ENCODE measurements at regions of chr1 and their contacts with region 1.

Region 1: DNA sequence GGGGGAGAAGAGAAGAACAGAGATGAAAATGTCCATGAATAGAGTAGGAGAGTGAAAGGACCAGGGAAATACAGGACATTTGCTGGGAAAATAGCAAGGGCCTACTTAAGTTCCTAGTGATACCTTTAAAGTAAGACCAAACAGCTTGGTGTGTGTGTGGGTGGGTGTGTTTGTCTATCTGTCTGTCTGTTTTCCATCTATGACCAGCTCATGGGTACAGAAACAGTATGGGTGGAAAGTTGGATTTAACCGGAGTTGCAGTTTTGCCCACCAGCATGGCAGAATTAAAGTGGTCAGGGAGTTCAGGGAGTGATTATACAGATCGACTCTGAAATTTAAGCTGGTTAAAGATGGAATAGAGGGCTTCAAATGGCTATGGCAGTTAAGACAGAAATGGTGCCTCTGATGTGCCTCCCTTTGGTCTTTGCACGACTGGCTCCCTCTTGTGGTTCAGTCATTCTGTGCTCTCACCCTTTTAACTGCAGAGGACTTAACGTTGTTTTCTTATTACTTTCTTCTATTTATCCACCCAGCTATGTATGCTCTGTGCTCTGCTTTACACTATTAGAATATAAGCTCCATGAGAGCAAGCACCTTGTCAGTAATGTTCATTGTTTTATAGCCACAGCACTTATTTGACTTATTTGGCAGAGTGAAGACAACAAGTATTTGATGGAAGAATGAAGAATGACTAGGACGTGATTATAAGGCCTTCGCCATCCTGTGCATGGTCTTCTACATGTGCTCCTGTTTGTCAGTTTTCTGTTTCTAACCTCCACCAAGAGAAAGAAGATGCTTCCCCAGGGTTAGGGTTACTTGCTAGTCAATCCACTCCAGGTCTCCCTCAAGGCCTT is 72.7 kb upstream of the AK4 start:
- DNase-seq: peak; percentile 75
- H3K4me3 ChIP-seq: no peak overlapping the region
- H3K27ac ChIP-seq: no peak overlapping the region
- H3K4me1 ChIP-seq: no peaks in the 10 kb centered on the region
- H3K27me3 ChIP-seq: peaks cover 0 to 3% of the 10 kb centered on the region in 2 experiments
- CTCF ChIP-seq: peak; percentile 74 to 76
- POLR2A ChIP-seq: no peak

Region 2: DNA sequence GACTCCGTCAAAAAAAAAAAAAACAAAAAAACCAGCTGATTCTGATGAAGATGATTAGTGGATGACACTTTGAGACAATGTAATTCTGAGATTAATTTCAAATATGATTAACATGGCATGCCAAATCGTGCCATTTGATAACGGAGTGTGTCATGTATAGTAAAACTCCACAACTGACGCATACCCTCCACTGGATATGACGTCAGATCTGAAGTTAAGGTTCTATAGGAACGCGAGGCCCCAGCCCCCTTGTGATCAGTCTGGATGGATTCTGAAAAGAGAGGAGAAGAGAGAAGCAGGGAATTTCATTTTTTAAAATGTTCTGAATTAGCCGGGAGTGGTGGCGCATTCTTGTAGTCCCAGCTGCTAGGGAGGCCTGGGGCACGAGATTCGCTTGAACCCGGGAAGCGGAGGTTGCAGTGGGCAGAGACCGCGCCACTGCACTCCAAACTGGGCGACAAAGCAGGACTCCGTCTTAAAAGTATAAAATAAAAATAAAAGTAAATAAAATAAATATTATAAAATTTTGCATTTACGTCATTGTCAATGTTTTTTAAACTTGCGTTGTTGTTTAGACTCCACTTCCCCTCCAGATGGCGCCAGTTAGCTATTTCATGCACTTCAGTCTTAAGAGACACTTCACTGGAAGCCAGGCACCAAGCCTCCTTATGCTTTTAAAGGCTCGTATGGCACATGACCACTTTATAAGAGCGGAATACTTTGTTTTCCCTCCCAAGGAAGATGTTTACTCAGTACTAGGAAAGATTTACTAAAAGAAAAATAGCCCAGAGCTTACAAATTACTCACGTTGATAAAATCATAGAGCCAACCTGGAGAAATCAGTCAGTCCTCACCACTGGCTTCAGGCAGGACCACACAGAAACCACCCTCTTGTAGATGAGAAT is 806.4 kb before region 1 on chr1:
- CTCF ChIA-PET with region 1: interaction called, 4 read pairs
- POLR2A ChIA-PET with region 1: no interaction called
- dilution Hi-C with region 1: no loop called
- intact Hi-C with region 1: loop called (anchors 1 kb)
- DNase-seq: peak; percentile 76
- H3K4me3 ChIP-seq: no peak overlapping the region
- H3K27ac ChIP-seq: no peak overlapping the region
- H3K4me1 ChIP-seq: peaks cover under 1% of the 10 kb centered on the region
- H3K27me3 ChIP-seq: peaks cover 0 to 5% of the 10 kb centered on the region in 2 experiments
- CTCF ChIP-seq: peak; percentile 49 to 58
- POLR2A ChIP-seq: no peak

Region 3: DNA sequence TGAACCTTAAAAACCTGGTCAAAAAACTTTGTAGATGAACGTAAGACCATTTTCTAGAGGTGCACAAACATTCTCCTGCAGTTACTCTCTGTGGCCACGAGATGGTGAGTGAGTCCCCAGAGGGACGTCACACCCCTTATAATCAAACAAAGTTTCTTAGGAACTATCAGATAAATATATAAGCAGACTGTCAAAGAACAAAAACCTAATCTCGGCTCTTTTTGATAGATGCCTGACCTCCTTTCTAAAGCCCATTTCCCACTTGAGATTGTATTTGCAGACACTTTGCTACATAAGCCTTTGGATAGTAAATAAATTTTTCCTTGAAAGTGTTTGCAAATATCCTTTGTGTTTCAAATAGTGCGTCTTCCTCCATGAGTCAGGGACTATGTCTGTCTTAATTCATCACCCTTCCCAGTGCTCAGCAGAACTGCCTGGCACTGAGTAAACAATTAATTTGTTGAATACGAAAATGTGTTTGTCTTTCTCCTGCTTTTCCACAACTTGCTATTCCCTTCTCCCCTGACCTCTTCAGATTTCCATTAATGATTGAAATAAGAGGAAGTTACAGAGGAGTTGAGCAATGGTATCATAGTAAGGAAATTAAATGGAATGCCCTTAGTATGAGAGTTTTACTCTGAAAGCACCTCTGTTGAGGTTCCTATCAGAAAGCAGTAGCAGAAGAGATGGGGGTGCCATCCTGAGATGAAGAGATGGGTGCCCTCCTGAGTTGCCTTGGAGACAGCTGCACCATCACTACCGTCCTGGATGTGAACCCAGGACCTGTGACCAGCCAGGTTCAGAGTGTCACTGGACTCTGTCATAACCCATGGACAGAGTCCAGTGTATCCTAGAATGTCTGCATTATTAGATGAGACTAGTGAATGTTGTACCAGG is 388.3 kb before region 1 on chr1:
- CTCF ChIA-PET with region 1: interaction called, 3 read pairs
- POLR2A ChIA-PET with region 1: no interaction called
- dilution Hi-C with region 1: no loop called
- intact Hi-C with region 1: loop called (anchors 1 kb)
- DNase-seq: peak; percentile 88
- H3K4me3 ChIP-seq: peak overlapping the region in 1 of 3 experiments; percentile 22
- H3K27ac ChIP-seq: peak overlapping the region; percentile 95
- H3K4me1 ChIP-seq: peaks cover 31% of the 10 kb centered on the region
- H3K27me3 ChIP-seq: no peaks in the 10 kb centered on the region
- CTCF ChIP-seq: peak; percentile 67 to 73
- POLR2A ChIP-seq: no peak

Region 4: GRCh38 chr1:64733581-64734286 is 341.6 kb before region 1 on chr1:
- CTCF ChIA-PET with region 1: no interaction called
- POLR2A ChIA-PET with region 1: no interaction called
- dilution Hi-C with region 1: no loop called
- intact Hi-C with region 1: no loop called
- DNase-seq: no peak
- H3K4me3 ChIP-seq: no peak overlapping the region
- H3K27ac ChIP-seq: no peak overlapping the region
- H3K4me1 ChIP-seq: no peaks in the 10 kb centered on the region
- H3K27me3 ChIP-seq: peaks cover 0 to 1% of the 10 kb centered on the region in 2 experiments
- CTCF ChIP-seq: no peak
- POLR2A ChIP-seq: no peak

Region 5: GRCh38 chr1:64744492-64745180 is 330.7 kb before region 1 on chr1 and contains the start of gene RAVER2:
- CTCF ChIA-PET with region 1: interaction called, 3 read pairs
- POLR2A ChIA-PET with region 1: no interaction called
- dilution Hi-C with region 1: no loop called
- intact Hi-C with region 1: loop called (anchors 5 kb)
- DNase-seq: peak; percentile 56
- H3K4me3 ChIP-seq: peak within 1 kb of the TSS; percentile 61 to 89 (median 71)
- H3K27ac ChIP-seq: peak within 1 kb of the TSS; percentile 26
- H3K4me1 ChIP-seq: peaks cover 6% of the 10 kb centered on the region
- H3K27me3 ChIP-seq: no peaks in the 10 kb centered on the region
- CTCF ChIP-seq: peak; percentile 40 to 54
- POLR2A ChIP-seq: peak; percentile 37
- total RNA-seq, gene RAVER2: 10.3 and 13.9 TPM in 2 replicates

Region 6: GRCh38 chr1:64823691-64824476 is 251.5 kb before region 1 on chr1:
- CTCF ChIA-PET with region 1: interaction called, 6 read pairs
- POLR2A ChIA-PET with region 1: no interaction called
- dilution Hi-C with region 1: no loop called
- intact Hi-C with region 1: loop called (anchors 1 kb)
- DNase-seq: peak; percentile 81
- H3K4me3 ChIP-seq: no peak overlapping the region
- H3K27ac ChIP-seq: no peak overlapping the region
- H3K4me1 ChIP-seq: peaks cover 2% of the 10 kb centered on the region
- H3K27me3 ChIP-seq: no peaks in the 10 kb centered on the region
- CTCF ChIP-seq: peak; percentile 61 to 69
- POLR2A ChIP-seq: no peak

Region 7: GRCh38 chr1:65059930-65060538 is 15.3 kb before region 1 on chr1:
- CTCF ChIA-PET with region 1: interaction called, 25 read pairs
- POLR2A ChIA-PET with region 1: no interaction called
- dilution Hi-C with region 1: no loop called
- intact Hi-C with region 1: loop called (anchors 1 kb)
- DNase-seq: peak; percentile 69
- H3K4me3 ChIP-seq: no peak overlapping the region
- H3K27ac ChIP-seq: no peak overlapping the region
- H3K4me1 ChIP-seq: peaks cover 3% of the 10 kb centered on the region
- H3K27me3 ChIP-seq: no peaks in the 10 kb centered on the region
- CTCF ChIP-seq: peak; percentile 33 to 39
- POLR2A ChIP-seq: no peak

Region 8: DNA sequence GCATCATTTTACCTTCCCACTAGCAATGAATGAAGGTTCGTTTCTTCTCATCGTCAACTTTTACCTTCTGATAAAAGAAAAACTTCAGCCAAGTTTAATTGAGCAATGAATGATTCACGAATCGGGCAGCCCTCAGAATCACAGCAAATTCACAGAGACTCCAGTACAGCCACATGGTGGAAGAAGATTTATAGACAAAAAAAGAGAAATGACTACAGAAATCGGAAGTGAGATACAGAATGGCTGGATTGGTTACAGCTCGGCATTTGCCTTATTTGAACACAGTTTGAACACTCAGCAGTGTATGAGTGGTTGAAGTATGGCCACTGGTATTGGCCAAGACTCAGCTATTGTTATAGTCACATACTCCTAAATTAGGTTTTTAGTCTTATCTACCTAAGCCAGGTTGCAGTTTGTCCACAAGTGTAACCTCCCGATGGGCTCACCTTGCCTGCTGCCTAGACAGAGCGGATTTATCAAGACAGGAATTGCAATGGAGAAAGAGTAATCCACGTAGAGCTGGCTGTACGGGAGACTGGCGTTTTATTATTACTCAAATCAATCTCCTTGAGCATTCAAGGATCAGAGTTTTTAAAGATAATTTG is 88.0 kb after region 1 on chr1:
- CTCF ChIA-PET with region 1: no interaction called
- POLR2A ChIA-PET with region 1: no interaction called
- dilution Hi-C with region 1: no loop called
- intact Hi-C with region 1: no loop called
- DNase-seq: no peak
- H3K4me3 ChIP-seq: no peak overlapping the region
- H3K27ac ChIP-seq: no peak overlapping the region
- H3K4me1 ChIP-seq: no peaks in the 10 kb centered on the region
- H3K27me3 ChIP-seq: no peaks in the 10 kb centered on the region
- CTCF ChIP-seq: no peak
- POLR2A ChIP-seq: no peak

Region 9: GRCh38 chr1:65209005-65209885 is 133.9 kb after region 1 on chr1:
- CTCF ChIA-PET with region 1: interaction called, 10 read pairs
- POLR2A ChIA-PET with region 1: no interaction called
- dilution Hi-C with region 1: no loop called
- intact Hi-C with region 1: no loop called
- DNase-seq: peak; percentile 67
- H3K4me3 ChIP-seq: no peak overlapping the region
- H3K27ac ChIP-seq: no peak overlapping the region
- H3K4me1 ChIP-seq: no peaks in the 10 kb centered on the region
- H3K27me3 ChIP-seq: peaks cover 0 to 2% of the 10 kb centered on the region in 2 experiments
- CTCF ChIP-seq: peak; percentile 39 to 42
- POLR2A ChIP-seq: no peak